Psoas muscle (tissue), 8 donors: ENCODE measurements at regions of chr17 and their contacts with region 1.

Region 1: GRCh38 chr17:34579017-34579946 is at the start of gene TMEM132E:
- DNase-seq: peak in 1 of 2 donors; percentile 23
- ATAC-seq: peak; percentile 57 to 76 (median 67)
- H3K4me3 ChIP-seq: peak within 1 kb of the TSS; percentile 72
- H3K27ac ChIP-seq: no peak within 1 kb of the TSS
- H3K4me1 ChIP-seq: peaks cover 28% of the 10 kb centered on the region
- H3K27me3 ChIP-seq: peaks cover 0 to 96% (median 25%) of the 10 kb centered on the region in 3 donors
- CTCF ChIP-seq: no peak
- total RNA-seq, gene TMEM132E: 0.26 TPM in 1 of 4 donors, not detected in the others

Region 2: DNA sequence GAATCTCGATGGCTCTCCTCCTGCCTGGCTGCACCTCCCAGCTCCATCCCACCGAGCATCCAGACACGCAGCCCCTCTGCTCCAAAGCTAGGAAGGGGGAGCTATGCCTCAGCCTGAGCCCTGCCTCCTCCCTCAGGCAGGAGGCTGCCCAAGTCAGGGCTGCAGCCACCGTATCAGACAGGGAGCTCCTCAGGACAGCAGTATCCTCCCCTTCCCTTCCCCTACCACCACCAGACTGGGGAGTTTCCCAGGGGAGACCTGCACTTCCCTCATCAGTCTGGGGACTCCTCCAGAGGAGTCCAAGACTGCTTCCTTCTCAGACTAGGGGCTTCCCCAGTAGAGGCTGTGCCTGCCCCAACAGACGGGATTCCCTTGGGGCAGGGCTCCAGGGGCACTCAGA is 17.6 kb after region 1 on chr17:
- intact Hi-C with region 1: loop called in 1 of 2 experiments (anchors 2 kb)
- DNase-seq: no peak
- ATAC-seq: no peak
- H3K4me3 ChIP-seq: no peak overlapping the region
- H3K27ac ChIP-seq: no peak overlapping the region
- H3K4me1 ChIP-seq: no peaks in the 10 kb centered on the region
- H3K27me3 ChIP-seq: peaks cover 0 to 35% (median 2%) of the 10 kb centered on the region in 3 donors
- CTCF ChIP-seq: no peak